Dorsolateral prefrontal cortex (tissue), 120 donors: ENCODE measurements at regions of chr9 and their contacts with region 1.

Region 1: GRCh38 chr9:6412487-6413364 is at the start of gene UHRF2:
- DNase-seq: peak; percentile 94 to 99 (median 97)
- H3K4me3 ChIP-seq: peak within 1 kb of the TSS; percentile 68 to 99 (median 93)
- H3K27ac ChIP-seq: peak within 1 kb of the TSS; percentile 68 to 98 (median 94)
- H3K27me3 ChIP-seq: no peaks in the 10 kb centered on the region
- CTCF ChIP-seq: peak in 33 of 56 donors; percentile 5 to 58 (median 33)
- total RNA-seq, gene UHRF2: 34.8 to 107 (median 53.6) TPM

Region 2: DNA sequence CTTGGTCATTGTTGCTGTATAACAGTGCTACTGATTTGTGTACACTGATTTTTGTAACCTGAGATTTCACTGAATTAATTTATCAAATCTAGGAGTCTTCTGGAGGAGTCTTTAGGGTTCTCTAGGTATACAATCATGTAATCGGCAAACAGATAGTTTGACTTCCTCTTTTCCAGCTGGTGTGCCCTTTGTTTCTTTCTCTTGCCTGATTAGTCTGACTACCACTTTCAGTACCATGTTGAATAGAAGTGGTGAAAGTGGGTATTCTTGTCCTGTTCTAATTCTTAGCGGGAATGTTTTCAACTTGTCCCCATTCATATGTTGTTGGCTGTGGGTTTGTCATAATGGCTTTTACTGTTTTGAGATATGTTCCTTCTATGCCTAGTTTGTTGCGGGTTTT is 372.6 kb before region 1 on chr9:
- intact Hi-C with region 1: no loop called
- DNase-seq: no peak
- H3K4me3 ChIP-seq: no peak overlapping the region
- H3K27ac ChIP-seq: no peak overlapping the region
- H3K27me3 ChIP-seq: no peaks in the 10 kb centered on the region
- CTCF ChIP-seq: no peak

Region 3: DNA sequence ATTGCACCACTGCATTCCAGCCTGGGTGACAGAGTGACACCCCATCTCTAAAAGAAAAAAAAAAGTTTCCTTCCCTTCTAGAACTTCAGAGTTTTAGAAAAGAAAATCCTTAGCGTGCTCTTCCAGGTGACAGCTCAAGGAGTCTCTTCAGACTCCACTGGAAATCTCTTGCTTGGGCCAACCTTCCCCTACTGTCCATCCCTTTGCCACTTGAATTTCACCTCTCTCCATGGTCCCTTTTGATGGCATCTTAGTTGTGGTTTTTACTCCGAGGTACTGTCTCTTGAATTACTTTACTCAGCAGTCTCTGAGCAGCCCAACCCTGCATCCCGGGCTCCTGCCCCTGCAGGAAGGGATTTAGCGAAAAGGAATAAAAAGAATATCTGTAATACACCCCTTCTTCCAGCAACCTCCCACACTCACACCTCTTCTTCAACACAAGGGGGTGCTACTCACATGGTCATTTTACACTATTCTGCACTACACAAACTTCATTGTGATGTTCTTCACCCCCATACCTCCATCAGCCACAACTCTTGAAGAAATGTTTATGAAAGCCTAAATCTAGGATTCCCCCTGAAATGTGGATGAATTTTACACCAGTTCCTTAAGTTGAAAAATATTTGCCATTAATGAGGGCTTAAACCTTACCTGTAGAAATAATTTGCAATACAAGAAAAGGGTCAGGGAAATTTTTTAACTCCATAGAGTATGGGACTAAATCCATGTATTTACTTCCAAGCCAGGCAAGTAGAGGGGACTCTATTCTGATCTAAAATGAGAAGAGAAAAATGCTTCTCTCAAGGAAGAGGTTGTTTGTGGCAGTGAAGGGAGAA is 58.7 kb before region 1 on chr9:
- intact Hi-C with region 1: loop called in 1 of 2 experiments (anchors 5 kb)
- DNase-seq: peak in 1 of 10 donors; percentile 5
- H3K4me3 ChIP-seq: no peak overlapping the region
- H3K27ac ChIP-seq: no peak overlapping the region
- H3K27me3 ChIP-seq: no peaks in the 10 kb centered on the region
- CTCF ChIP-seq: peak; percentile 52 to 94 (median 86)

Region 4: GRCh38 chr9:6467006-6467625 is 54.4 kb after region 1 on chr9:
- intact Hi-C with region 1: loop called (anchors 5 kb)
- DNase-seq: no peak
- H3K4me3 ChIP-seq: peak overlapping the region in 12 of 59 donors; percentile 3 to 32 (median 14)
- H3K27ac ChIP-seq: peak overlapping the region in 56 of 59 donors; percentile 14 to 88 (median 70)
- H3K27me3 ChIP-seq: no peaks in the 10 kb centered on the region
- CTCF ChIP-seq: no peak

Region 5: GRCh38 chr9:6498982-6499381 is 86.3 kb after region 1 on chr9:
- intact Hi-C with region 1: loop called in 1 of 2 experiments (anchors 5 kb)
- DNase-seq: no peak
- H3K4me3 ChIP-seq: no peak overlapping the region
- H3K27ac ChIP-seq: peak overlapping the region in 21 of 59 donors; percentile 3 to 67 (median 28)
- H3K27me3 ChIP-seq: no peaks in the 10 kb centered on the region
- CTCF ChIP-seq: no peak

Region 6: GRCh38 chr9:6512085-6512657 is 99.4 kb after region 1 on chr9:
- intact Hi-C with region 1: no loop called
- DNase-seq: no peak
- H3K4me3 ChIP-seq: no peak overlapping the region
- H3K27ac ChIP-seq: no peak overlapping the region
- H3K27me3 ChIP-seq: no peaks in the 10 kb centered on the region
- CTCF ChIP-seq: no peak

Region 7: DNA sequence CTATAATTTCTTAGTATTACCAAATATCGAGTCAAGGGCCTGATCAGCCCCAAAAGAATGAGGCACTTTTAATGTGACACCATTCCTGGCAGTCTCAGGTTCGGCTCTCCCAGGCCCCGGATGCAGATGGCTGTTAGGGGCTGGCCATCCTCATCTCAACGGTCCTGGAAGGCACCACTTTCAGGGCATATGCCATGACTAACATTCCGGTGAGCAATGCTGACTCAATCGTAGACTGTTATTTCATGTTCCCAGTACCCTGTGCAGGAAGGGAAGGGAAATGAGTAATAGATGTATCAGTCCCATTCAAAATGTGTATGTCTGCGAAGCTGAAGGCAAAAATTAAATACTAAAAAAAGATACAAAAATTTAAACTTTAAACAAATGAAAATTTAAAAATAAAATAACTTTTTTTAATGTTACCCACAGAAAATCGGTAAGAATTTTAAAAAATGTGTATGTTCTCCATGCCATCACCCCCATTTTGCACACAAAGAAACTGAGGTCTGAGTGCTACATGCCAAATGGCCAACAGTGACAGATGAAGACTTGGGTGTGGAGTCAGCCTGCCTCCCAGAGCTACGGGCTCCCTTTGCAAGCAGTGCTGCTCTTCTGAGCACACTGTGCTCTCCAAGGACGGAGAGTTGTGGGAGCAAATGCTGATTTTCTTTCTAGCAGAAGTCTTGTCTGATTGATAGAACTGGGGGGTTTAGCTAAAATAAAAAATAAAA is 153.8 kb after region 1 on chr9:
- intact Hi-C with region 1: loop called (anchors 1 to 10 kb)
- DNase-seq: peak in 3 of 10 donors; percentile 26 to 57 (median 40)
- H3K4me3 ChIP-seq: peak overlapping the region in 23 of 59 donors; percentile 2 to 46 (median 17)
- H3K27ac ChIP-seq: peak overlapping the region in 57 of 59 donors; percentile 9 to 91 (median 77)
- H3K27me3 ChIP-seq: no peaks in the 10 kb centered on the region
- CTCF ChIP-seq: peak in 4 of 56 donors; percentile 5 to 20 (median 12)

Region 8: DNA sequence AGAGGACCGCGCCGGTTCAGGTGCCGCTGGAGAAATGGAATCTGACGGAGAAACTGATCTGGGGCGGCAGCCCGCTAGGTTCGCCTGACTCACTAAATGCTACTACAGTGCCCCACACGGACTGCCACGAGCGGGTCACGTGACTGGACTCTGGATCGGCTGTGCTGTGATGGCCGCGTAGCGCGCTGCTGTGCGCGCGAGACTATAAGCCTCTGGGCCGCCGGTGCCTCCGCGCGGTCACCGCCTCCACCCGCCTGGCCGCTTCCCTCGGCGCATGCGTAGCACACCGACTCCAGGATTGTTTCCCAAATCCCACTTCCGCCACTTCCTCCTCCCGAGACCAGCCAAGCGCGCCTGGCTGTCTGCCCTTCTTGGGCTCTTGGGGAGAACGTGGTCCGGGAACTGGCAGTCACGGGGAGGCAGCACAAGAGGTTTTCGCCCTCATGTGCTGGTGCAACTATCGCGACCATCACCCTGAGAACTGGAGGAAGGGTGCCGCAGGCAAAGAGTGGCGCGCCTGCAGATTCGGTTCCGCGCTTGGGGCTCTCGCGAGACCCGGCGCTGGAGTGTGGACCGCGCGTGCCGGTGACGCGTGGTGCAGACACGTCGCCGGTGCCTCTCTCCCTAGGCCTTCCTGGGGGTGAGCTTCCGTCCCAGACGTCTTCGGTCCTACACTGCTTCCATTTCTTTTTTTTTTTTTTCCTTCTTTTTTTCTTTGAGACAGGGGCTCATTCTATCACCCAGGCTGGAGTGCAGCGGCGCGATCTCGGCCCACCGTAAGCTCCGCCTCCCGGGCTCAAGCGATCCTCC is 268.6 kb after region 1 on chr9:
- intact Hi-C with region 1: loop called (anchors 1 to 10 kb)
- DNase-seq: peak; percentile 93 to 98 (median 95)
- H3K4me3 ChIP-seq: peak overlapping the region; percentile 51 to 95 (median 80)
- H3K27ac ChIP-seq: peak overlapping the region; percentile 92 to 100 (median 99)
- H3K27me3 ChIP-seq: no peaks in the 10 kb centered on the region
- CTCF ChIP-seq: peak in 35 of 56 donors; percentile 4 to 52 (median 22)